ENCODE measurements at regions of chr12 and their contacts with region 1.

Region 1: DNA sequence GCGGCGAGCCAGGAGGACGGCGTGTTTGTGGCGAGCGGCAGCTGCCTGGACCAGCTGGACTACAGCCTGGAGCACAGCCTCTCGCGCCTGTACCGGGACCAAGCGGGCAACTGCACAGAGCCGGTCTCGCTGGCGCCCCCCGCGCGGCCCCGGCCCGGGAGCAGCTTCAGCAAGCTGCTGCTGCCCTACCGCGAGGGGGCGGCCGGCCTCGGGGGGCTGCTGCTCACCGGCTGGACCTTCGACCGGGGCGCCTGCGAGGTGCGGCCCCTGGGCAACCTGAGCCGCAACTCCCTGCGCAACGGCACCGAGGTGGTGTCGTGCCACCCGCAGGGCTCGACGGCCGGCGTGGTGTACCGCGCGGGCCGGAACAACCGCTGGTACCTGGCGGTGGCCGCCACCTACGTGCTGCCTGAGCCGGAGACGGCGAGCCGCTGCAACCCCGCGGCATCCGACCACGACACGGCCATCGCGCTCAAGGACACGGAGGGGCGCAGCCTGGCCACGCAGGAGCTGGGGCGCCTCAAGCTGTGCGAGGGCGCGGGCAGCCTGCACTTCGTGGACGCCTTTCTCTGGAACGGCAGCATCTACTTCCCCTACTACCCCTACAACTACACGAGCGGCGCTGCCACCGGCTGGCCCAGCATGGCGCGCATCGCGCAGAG is 873 bp downstream of the PLXNC1 start:
- DNase-seq: peak in 13 of 14 experiments; percentile 7 to 70 (median 33)
- ATAC-seq: peak; percentile 33
- H3K4me3 ChIP-seq: peak overlapping the region; percentile 57
- H3K4me3 Mint-ChIP-seq: peak overlapping the region; percentile 89
- H3K27ac ChIP-seq: no peak overlapping the region
- H3K27ac Mint-ChIP-seq: no peak overlapping the region
- H3K4me1 ChIP-seq: peaks cover 29% of the 10 kb centered on the region
- H3K4me1 Mint-ChIP-seq: peaks cover 38% of the 10 kb centered on the region
- H3K27me3 ChIP-seq: no peaks in the 10 kb centered on the region
- H3K27me3 Mint-ChIP-seq: no peaks in the 10 kb centered on the region
- CTCF ChIP-seq: peak; percentile 47

Region 2: DNA sequence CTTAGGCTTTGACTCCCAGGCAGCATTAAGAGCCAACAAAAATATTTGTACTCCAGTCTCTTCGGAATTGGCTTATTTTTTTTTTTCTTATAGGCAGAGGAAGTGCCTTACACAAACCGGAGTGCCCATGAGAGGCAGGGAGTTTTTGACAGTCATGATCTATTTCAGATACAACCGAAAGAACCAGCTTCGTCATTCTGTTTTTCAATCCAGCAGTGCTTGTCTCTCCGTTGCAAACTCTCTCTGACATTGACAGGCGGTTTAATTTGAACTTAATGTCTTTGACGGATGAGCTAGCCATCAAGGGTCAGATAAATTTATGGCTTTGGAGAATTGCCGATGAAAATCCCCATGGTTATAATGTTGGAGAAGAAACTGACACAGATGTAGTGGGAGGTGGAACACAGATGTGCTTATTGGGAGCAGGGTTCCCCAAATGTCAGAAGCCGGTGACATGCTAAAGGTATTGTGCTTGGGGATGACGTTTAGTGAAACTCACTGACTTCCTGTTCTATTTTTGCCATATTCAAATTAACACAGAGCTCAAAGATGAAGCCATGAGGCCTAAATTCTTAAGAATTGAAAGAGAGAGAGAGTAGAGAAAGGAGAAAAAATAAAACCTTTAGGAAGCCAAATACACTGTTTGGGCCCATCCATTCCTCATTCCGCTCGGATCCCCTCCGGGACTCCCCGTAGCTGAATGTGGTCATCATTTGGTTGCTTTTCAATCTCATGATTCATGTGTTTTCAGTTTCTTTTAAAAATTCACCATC is 58.8 kb after region 1 on chr12:
- CTCF ChIA-PET with region 1: interaction called, 4 read pairs
- POLR2A ChIA-PET with region 1: interaction called, 8 read pairs
- intact Hi-C with region 1: loop called in 1 of 2 experiments (anchors 2 kb)
- DNase-seq: peak in 10 of 14 experiments; percentile 1 to 78 (median 15)
- ATAC-seq: peak; percentile 80
- H3K4me3 ChIP-seq: peak overlapping the region; percentile 41
- H3K4me3 Mint-ChIP-seq: peak overlapping the region; percentile 74
- H3K27ac ChIP-seq: peak overlapping the region; percentile 71 to 83
- H3K27ac Mint-ChIP-seq: peak overlapping the region; percentile 97
- H3K4me1 ChIP-seq: peaks cover 36% of the 10 kb centered on the region
- H3K4me1 Mint-ChIP-seq: peaks cover 53% of the 10 kb centered on the region
- H3K27me3 ChIP-seq: no peaks in the 10 kb centered on the region
- H3K27me3 Mint-ChIP-seq: no peaks in the 10 kb centered on the region
- CTCF ChIP-seq: no peak

Region 3: DNA sequence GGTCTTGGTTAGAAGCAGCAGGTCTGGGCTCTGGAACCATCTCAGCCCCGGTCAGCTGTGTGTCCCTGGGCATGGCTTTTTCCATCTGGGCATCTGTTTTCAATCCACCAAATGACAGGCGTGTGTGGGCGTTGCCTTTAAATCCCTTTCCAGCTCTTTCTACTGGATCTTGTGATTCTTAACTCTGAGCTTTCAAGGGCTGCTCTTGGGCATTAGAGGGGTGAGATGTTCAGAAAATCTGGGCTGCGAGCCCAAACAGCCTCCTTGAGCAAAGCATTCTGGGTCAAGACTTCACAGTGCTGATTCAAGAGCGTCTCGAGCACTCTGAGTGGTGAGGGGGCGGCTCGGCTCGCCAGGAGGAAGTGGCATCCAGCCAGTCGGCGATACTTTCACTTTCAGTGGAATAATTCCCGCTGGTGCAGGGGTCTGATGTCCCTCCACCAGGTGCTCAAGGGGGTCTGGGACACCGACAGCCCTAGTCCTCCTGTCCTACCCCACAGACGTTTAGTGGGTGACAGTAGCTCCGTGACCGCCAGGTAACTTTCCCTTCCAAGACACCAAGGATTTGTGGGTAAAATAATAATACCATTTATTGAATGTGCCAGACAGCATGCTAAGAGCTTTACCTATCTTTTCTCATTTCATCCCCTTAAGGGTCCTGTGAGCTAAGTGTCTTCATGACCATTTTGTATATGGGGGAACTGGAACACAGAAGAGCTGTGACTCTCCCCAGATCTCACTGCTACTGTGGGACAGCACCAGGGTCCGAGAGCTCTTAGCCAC is 113.2 kb after region 1 on chr12:
- CTCF ChIA-PET with region 1: interaction called, 5 read pairs
- POLR2A ChIA-PET with region 1: interaction called, 22 read pairs
- intact Hi-C with region 1: loop called (anchors 5 kb)
- DNase-seq: peak; percentile 50 to 86 (median 66)
- ATAC-seq: peak; percentile 90
- H3K4me3 ChIP-seq: peak overlapping the region; percentile 82
- H3K4me3 Mint-ChIP-seq: peak overlapping the region; percentile 98
- H3K27ac ChIP-seq: peak overlapping the region; percentile 89 to 92
- H3K27ac Mint-ChIP-seq: peak overlapping the region; percentile 99
- H3K4me1 ChIP-seq: peaks cover 31% of the 10 kb centered on the region
- H3K4me1 Mint-ChIP-seq: peaks cover 46% of the 10 kb centered on the region
- H3K27me3 ChIP-seq: no peaks in the 10 kb centered on the region
- H3K27me3 Mint-ChIP-seq: no peaks in the 10 kb centered on the region
- CTCF ChIP-seq: no peak

Region 4: DNA sequence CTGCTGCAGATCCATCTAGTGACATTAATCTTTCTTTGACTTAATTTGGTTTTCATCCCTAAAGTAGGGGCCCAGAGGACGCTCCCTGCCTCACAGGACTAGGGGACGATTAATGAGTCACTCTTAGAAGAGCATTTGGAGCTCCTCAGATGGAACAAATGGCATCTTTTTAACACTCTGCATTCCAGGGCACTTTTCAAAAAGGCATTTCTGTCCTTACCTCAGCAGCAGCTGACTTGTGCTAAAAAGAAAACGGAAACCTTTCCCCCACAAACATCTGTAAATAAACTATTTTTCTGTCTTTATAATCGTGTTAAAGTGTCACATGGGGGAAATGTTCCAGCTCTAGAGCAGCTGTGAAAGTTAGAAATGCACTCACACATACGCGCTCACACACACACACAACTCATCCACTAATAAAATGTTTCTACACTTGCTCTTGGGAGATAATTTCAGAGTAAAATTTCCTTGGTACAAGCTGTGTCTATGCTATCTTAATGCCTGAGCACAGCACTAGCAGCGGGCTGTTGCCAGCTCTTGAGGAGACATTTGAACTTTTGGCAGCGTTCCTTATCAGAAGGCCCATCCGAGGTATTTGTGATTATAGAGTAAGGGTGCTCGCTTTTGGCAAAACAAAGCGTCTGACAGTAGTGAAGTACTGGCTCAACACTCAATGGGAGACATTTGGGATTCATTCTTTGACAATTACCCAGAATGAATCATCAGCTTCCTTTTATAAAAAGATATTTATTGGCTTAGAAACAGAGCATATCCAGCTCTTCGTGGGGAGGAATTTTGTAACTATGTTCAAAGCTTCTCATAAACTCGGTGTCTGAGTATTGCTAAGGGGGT is 140.4 kb after region 1 on chr12:
- CTCF ChIA-PET with region 1: no interaction called
- POLR2A ChIA-PET with region 1: no interaction called
- intact Hi-C with region 1: loop called in 1 of 2 experiments (anchors 5 kb)
- DNase-seq: no peak
- ATAC-seq: no peak
- H3K4me3 ChIP-seq: no peak overlapping the region
- H3K4me3 Mint-ChIP-seq: no peak overlapping the region
- H3K27ac ChIP-seq: no peak overlapping the region
- H3K27ac Mint-ChIP-seq: no peak overlapping the region
- H3K4me1 ChIP-seq: no peaks in the 10 kb centered on the region
- H3K4me1 Mint-ChIP-seq: no peaks in the 10 kb centered on the region
- H3K27me3 ChIP-seq: no peaks in the 10 kb centered on the region
- H3K27me3 Mint-ChIP-seq: no peaks in the 10 kb centered on the region
- CTCF ChIP-seq: no peak

Region 5: GRCh38 chr12:94435511-94435927 is 286.3 kb after region 1 on chr12:
- CTCF ChIA-PET with region 1: no interaction called
- POLR2A ChIA-PET with region 1: no interaction called
- intact Hi-C with region 1: loop called in 1 of 2 experiments (anchors 5 kb)
- DNase-seq: no peak
- ATAC-seq: no peak
- H3K4me3 ChIP-seq: no peak overlapping the region
- H3K4me3 Mint-ChIP-seq: no peak overlapping the region
- H3K27ac ChIP-seq: no peak overlapping the region
- H3K27ac Mint-ChIP-seq: no peak overlapping the region
- H3K4me1 ChIP-seq: no peaks in the 10 kb centered on the region
- H3K4me1 Mint-ChIP-seq: peaks cover 18% of the 10 kb centered on the region
- H3K27me3 ChIP-seq: no peaks in the 10 kb centered on the region
- H3K27me3 Mint-ChIP-seq: no peaks in the 10 kb centered on the region
- CTCF ChIP-seq: no peak

Region 6: DNA sequence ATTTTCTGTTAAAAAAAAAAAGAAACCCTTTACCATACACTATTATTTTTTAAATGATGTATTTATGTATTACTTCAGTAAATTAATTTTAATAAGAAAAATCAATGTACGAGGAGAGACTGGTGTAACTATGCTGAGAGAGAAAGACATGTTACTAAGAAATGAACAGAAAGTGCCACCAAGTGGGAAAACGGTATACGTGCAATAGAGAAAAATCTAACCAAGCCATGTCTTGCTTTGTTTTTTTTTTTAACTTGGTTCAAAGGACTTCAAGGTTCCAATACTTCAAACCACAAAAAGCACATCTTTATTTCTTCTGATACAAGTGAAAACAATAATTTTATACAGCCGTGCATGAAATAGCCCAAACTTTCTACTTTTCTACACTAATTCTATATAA is 831.3 kb after region 1 on chr12:
- CTCF ChIA-PET with region 1: no interaction called
- POLR2A ChIA-PET with region 1: no interaction called
- intact Hi-C with region 1: loop called in 1 of 2 experiments (anchors 5 kb)
- DNase-seq: peak in 3 of 14 experiments; percentile 35 to 65 (median 61)
- ATAC-seq: peak; percentile 87
- H3K4me3 ChIP-seq: no peak overlapping the region
- H3K4me3 Mint-ChIP-seq: peak overlapping the region; percentile 49
- H3K27ac ChIP-seq: no peak overlapping the region
- H3K27ac Mint-ChIP-seq: peak overlapping the region; percentile 84
- H3K4me1 ChIP-seq: peaks cover 44% of the 10 kb centered on the region
- H3K4me1 Mint-ChIP-seq: peaks cover 62% of the 10 kb centered on the region
- H3K27me3 ChIP-seq: no peaks in the 10 kb centered on the region
- H3K27me3 Mint-ChIP-seq: no peaks in the 10 kb centered on the region
- CTCF ChIP-seq: peak; percentile 50

Region 7: DNA sequence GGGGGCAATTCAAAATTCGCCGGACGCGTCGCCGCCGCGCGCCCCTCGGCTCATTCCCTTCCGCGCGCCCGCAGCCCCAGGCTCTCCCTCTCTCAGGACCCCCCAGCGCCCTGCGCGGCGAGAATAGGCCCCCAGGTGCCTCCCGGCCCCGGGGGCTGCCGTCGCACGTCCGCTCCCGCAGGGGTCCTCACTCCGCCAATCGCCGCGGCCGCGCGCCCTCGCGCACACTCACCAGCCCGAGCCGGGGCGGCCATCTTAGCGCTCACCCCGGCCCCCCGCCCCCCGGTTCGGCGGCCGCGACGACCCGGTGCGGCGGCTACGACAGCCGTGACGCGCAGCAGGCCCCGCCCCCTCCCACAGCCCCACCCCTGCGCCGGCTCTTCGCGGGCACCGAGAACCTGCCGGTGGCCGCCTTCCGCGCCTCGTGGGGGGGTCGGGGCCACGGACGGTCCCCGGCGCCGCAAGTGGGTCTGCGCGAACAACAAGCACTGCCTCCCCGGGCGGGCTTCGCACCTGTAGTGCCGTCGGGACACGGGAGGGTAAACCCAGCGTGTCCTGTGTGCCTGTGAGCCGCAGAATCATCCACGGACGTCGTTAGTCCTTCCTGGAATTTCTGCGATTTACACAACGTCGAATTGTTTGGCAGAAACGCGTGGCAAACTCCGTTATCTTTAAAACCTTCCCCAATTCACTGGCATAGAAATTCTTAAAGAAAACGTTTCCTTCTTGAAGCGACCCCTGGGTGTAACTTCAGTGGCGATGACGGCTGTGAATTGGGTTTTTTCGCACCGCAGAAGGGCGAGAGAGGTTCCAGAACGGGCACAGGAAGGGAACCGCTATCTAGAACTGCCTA is 1399.5 kb after region 1 on chr12:
- CTCF ChIA-PET with region 1: no interaction called
- POLR2A ChIA-PET with region 1: no interaction called
- intact Hi-C with region 1: loop called in 1 of 2 experiments (anchors 10 kb)
- DNase-seq: peak; percentile 48 to 89 (median 69)
- ATAC-seq: peak; percentile 82
- H3K4me3 ChIP-seq: peak overlapping the region; percentile 73
- H3K4me3 Mint-ChIP-seq: peak overlapping the region; percentile 96
- H3K27ac ChIP-seq: peak overlapping the region; percentile 66 to 72
- H3K27ac Mint-ChIP-seq: peak overlapping the region; percentile 84
- H3K4me1 ChIP-seq: peaks cover 15% of the 10 kb centered on the region
- H3K4me1 Mint-ChIP-seq: peaks cover 52% of the 10 kb centered on the region
- H3K27me3 ChIP-seq: no peaks in the 10 kb centered on the region
- H3K27me3 Mint-ChIP-seq: peaks cover 16% of the 10 kb centered on the region
- CTCF ChIP-seq: no peak